Right ventricle myocardium superior (tissue), 1 donor: ENCODE measurements at regions of chr9 and their contacts with region 1.

Region 1: DNA sequence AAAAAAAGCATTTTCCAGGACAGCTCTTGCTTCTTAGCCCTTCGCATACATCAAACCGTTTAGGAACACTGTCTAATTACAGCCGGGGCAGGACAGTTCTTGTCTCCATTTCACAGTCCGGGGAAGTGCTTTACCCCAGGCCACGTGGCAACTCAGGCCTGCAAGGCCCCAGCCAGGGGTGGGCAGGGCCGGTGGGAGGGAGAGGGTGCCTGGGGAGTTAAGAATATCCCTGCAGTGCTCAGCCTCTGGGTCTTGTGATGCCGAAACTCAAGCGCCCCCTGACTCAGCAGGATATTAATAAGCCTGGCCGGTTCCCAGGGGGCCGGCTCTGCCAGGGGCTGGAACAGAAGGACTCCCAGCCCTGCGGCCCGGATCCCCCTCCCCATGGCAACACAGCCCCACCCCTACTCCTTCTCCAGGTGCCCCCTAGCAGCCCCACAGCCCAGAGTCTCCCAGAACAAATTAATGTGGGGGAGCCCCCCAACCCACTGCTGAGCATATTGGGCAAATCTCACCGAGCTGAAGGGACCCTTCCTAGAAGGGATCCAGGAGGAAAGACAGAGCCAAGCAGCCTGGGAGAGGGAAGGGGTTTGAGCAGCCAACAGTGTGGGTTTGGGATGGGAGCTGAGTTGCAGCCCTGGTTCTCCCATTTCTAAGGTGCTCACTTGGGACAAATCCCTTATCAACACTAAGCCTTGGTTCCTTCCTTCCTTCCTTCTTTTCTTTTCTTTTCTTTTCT is 45.3 kb downstream of the PLPP7 start:
- DNase-seq: peak; percentile 86
- ATAC-seq: peak; percentile 88

Region 2: DNA sequence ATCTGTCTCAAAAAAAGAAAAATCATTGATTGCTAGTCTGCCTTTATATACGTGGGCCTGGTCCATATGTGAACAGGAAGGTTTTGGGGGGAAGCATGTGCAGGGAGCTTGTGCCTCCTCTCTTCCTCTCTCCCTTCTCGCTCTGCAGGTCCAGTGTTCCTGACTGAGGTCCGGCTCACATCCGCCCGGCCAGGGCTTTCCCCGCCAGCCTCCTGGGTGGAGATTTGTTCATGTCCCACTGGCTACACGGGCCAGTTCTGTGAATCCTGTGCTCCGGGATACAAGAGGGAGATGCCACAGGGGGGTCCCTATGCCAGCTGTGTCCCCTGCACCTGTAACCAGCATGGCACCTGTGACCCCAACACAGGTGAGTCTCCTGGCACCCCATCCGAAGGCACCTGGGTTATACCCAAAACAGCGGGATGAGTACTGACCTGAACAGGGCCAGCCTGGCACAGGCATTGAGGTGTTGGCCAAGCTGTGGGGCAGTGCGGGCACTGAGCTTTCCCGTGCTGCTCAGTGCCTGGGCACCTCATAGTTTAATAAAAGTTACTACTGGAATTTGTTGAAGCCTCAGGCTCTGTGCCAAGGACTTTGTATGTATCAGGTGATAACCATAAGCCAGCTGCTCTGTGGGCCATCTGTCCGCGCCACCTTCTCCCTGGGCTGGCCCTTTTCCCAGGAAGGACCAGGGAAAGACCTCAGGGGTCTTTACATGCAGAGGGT is 277.9 kb before region 1 on chr9:
- intact Hi-C with region 1: loop called (anchors 5 kb)
- DNase-seq: no peak
- ATAC-seq: peak; percentile 26

Region 3: GRCh38 chr9:131178382-131178781 is 156.4 kb before region 1 on chr9:
- intact Hi-C with region 1: loop called (anchors 2 kb)
- DNase-seq: peak; percentile 84
- ATAC-seq: peak; percentile 92

Region 4: GRCh38 chr9:131237931-131238401 is 96.8 kb before region 1 on chr9:
- intact Hi-C with region 1: loop called (anchors 5 kb)
- DNase-seq: peak; percentile 86
- ATAC-seq: peak; percentile 70

Region 5: GRCh38 chr9:131289301-131290038 is 45.3 kb before region 1 on chr9 and contains the start of gene PLPP7:
- intact Hi-C with region 1: loop called (anchors 5 kb)
- DNase-seq: peak; percentile 93
- ATAC-seq: peak; percentile 88
- total RNA-seq, gene PLPP7: 115 TPM